Activated T-helper 2 cell treated with anti-CD3 and anti-CD28 coated beads, Interferon-gamma antibody, Interleukin-2, Interleukin-4, amounts not matched to agents 10 μg/mL and 5 μg/mL and 100 μg/mL, durations not matched to agents 14 hours and 24 hours and 36 hours (primary cell): ENCODE measurements at regions of chr10 and their contacts with region 1.

Region 1: GRCh38 chr10:69318106-69318866 is 40.0 kb downstream of the HK1 start:
- DNase-seq: peak; percentile 90
- H3K4me3 Mint-ChIP-seq: peak overlapping the region; percentile 97
- H3K27ac Mint-ChIP-seq: peak overlapping the region; percentile 86
- H3K4me1 Mint-ChIP-seq: peaks cover 49% of the 10 kb centered on the region
- H3K27me3 Mint-ChIP-seq: no peaks in the 10 kb centered on the region

Region 2: GRCh38 chr10:69222157-69223027 is 95.9 kb before region 1 on chr10:
- intact Hi-C with region 1: loop called (anchors 5 kb)
- DNase-seq: peak; percentile 76
- H3K4me3 Mint-ChIP-seq: peak overlapping the region; percentile 44
- H3K27ac Mint-ChIP-seq: peak overlapping the region; percentile 91
- H3K4me1 Mint-ChIP-seq: peaks cover 41% of the 10 kb centered on the region
- H3K27me3 Mint-ChIP-seq: no peaks in the 10 kb centered on the region

Region 3: GRCh38 chr10:69237528-69238159 is 80.6 kb before region 1 on chr10:
- intact Hi-C with region 1: loop called (anchors 5 kb)
- DNase-seq: peak; percentile 77
- H3K4me3 Mint-ChIP-seq: no peak overlapping the region
- H3K27ac Mint-ChIP-seq: no peak overlapping the region
- H3K4me1 Mint-ChIP-seq: peaks cover 9% of the 10 kb centered on the region
- H3K27me3 Mint-ChIP-seq: no peaks in the 10 kb centered on the region

Region 4: DNA sequence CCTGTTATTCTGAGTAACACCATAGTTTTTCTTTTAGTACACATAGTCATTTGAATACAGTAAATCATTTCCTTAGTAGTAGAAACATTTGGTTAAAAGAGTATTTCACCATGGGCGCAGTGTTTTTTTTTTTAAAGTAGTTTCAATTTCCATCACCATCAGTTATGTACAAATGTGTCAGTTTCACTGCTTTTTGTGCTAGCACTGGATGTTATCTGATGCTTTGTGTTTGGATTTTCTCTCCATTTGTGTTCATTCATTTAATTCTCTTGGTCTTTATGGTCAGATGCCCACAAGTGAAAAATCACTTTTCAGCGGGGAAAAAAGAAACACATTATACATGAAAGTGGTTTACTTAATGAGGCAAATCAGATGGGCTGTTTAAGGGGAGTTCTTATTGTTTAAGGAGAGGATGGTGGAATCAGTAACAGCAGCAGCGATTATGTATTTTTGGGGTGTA is 56.0 kb before region 1 on chr10:
- intact Hi-C with region 1: loop called (anchors 2 kb)
- DNase-seq: no peak
- H3K4me3 Mint-ChIP-seq: no peak overlapping the region
- H3K27ac Mint-ChIP-seq: peak overlapping the region; percentile 68
- H3K4me1 Mint-ChIP-seq: peaks cover 14% of the 10 kb centered on the region
- H3K27me3 Mint-ChIP-seq: peaks cover 11% of the 10 kb centered on the region

Region 5: GRCh38 chr10:69348816-69349541 is 30.7 kb after region 1 on chr10:
- intact Hi-C with region 1: loop called (anchors 2 kb)
- DNase-seq: no peak
- H3K4me3 Mint-ChIP-seq: peak overlapping the region; percentile 38
- H3K27ac Mint-ChIP-seq: peak overlapping the region; percentile 71
- H3K4me1 Mint-ChIP-seq: peaks cover 61% of the 10 kb centered on the region
- H3K27me3 Mint-ChIP-seq: no peaks in the 10 kb centered on the region

Region 6: GRCh38 chr10:69392481-69393000 is 74.3 kb after region 1 on chr10:
- intact Hi-C with region 1: loop called (anchors 5 kb)
- DNase-seq: peak; percentile 74
- H3K4me3 Mint-ChIP-seq: no peak overlapping the region
- H3K27ac Mint-ChIP-seq: no peak overlapping the region
- H3K4me1 Mint-ChIP-seq: peaks cover 13% of the 10 kb centered on the region
- H3K27me3 Mint-ChIP-seq: no peaks in the 10 kb centered on the region

Region 7: DNA sequence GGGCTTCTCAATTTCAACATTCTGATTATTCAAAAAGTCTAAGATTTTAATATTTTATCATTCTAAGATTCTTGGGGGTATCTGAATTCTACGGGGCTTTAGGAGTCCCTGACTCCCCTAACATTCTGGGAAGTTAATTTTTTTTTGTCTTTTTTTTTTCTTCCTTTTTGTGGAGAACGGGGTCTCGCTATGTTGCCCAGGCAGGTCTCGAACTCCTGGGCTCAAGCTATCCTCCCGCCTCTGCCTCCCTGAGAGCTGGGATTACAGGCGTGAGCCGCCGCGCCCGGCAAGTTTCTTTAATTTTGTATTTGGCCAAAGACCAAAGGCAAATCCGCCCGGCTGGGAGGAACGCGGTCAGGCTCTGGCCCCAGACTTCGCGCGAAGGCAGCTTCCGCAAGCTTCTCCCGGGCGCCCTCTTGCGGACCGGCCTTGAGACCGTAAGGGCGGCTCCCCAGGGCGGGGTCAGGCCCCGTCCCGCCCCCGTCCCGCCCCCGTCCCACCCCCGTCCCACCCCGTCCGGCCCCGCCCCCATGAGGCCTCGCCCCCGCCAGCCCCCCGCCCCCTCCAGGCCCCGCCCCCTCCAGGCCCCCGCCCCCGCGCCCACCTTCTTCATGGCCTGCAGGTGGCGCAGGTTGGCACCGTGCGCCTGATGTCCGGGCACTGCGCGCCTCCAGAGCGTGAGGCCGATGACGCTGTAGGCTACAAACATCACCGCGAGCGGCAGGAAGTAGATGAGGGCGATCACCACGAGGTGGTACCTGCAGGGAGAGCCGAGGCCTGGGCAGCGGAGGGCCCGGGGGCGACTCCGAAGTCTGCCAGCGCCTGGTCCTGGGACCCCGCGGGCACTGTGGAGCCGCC is 90.3 kb after region 1 on chr10:
- intact Hi-C with region 1: loop called (anchors 5 kb)
- DNase-seq: peak; percentile 82
- H3K4me3 Mint-ChIP-seq: peak overlapping the region; percentile 76
- H3K27ac Mint-ChIP-seq: peak overlapping the region; percentile 86
- H3K4me1 Mint-ChIP-seq: peaks cover 9% of the 10 kb centered on the region
- H3K27me3 Mint-ChIP-seq: no peaks in the 10 kb centered on the region